ENCODE measurements at regions of chr6 and their contacts with region 1.

Region 1: GRCh38 chr6:106444777-106445507 is 84.4 kb downstream of the CRYBG1 start:
- DNase-seq: peak; percentile 79
- ATAC-seq: peak; percentile 59
- H3K4me3 ChIP-seq: no peak overlapping the region
- H3K4me3 Mint-ChIP-seq: no peak overlapping the region
- H3K27ac ChIP-seq: no peak overlapping the region
- H3K27ac Mint-ChIP-seq: peak overlapping the region; percentile 60
- H3K4me1 ChIP-seq: peaks cover 19 to 22% of the 10 kb centered on the region in 2 donors
- H3K4me1 Mint-ChIP-seq: peaks cover 20% of the 10 kb centered on the region
- H3K27me3 ChIP-seq: peaks cover 0 to 3% (median 0%) of the 10 kb centered on the region in 4 experiments
- H3K27me3 Mint-ChIP-seq: peaks cover 20% of the 10 kb centered on the region
- CTCF ChIP-seq: peak; percentile 92

Region 2: DNA sequence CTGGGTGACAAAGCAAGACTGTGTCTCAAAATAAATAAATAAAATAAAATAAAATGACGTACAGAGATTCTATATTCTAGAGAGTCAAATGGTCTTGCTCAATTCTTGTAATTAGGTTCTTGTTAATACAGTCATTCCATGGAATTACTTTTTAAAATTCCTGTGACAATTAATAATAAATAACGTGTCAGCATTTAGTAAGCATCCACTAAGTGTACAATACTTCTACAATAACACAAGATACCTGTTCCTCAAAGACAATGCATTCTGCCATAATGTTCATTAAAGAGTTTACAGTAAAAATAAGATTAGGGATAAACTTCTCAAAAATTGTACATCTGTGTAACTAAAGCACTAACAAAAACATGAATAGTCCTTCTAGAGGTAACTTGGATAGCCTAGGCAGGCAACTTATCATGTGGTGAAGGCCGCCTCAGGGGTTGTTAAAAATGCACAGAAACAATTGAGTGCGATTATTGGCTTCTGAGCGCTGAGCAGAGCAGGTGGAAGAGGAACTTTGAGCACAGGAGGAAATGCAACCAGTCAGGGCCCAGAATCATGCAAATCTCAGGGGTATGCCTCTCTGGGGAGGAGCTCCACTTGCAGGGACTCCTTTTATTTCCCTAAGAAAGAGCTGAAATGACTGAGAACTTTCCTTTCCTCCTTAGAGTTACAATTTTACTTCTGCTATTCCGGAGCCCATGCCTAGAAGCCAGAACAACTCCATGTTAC is 221.5 kb after region 1 on chr6:
- CTCF ChIA-PET with region 1: no interaction called
- POLR2A ChIA-PET with region 1: no interaction called
- intact Hi-C with region 1: no loop called
- DNase-seq: peak; percentile 86
- ATAC-seq: peak; percentile 99
- H3K4me3 ChIP-seq: peak overlapping the region in 2 of 5 experiments; percentile 2 to 29
- H3K4me3 Mint-ChIP-seq: peak overlapping the region; percentile 80
- H3K27ac ChIP-seq: peak overlapping the region; percentile 30 to 81
- H3K27ac Mint-ChIP-seq: peak overlapping the region; percentile 93
- H3K4me1 ChIP-seq: peaks cover 49 to 61% of the 10 kb centered on the region in 2 donors
- H3K4me1 Mint-ChIP-seq: peaks cover 64% of the 10 kb centered on the region
- H3K27me3 ChIP-seq: no peaks in the 10 kb centered on the region
- H3K27me3 Mint-ChIP-seq: no peaks in the 10 kb centered on the region
- CTCF ChIP-seq: no peak

Region 3: GRCh38 chr6:106688186-106688951 is 243.4 kb after region 1 on chr6:
- CTCF ChIA-PET with region 1: interaction called, 12 read pairs
- POLR2A ChIA-PET with region 1: no interaction called
- intact Hi-C with region 1: loop called (anchors 1 kb)
- DNase-seq: peak; percentile 32
- ATAC-seq: peak; percentile 33
- H3K4me3 ChIP-seq: peak overlapping the region in 1 of 5 experiments; percentile 1
- H3K4me3 Mint-ChIP-seq: peak overlapping the region; percentile 29
- H3K27ac ChIP-seq: no peak overlapping the region
- H3K27ac Mint-ChIP-seq: peak overlapping the region; percentile 26
- H3K4me1 ChIP-seq: peaks cover 19 to 30% of the 10 kb centered on the region in 2 donors
- H3K4me1 Mint-ChIP-seq: peaks cover 32% of the 10 kb centered on the region
- H3K27me3 ChIP-seq: no peaks in the 10 kb centered on the region
- H3K27me3 Mint-ChIP-seq: no peaks in the 10 kb centered on the region
- CTCF ChIP-seq: no peak

Region 4: DNA sequence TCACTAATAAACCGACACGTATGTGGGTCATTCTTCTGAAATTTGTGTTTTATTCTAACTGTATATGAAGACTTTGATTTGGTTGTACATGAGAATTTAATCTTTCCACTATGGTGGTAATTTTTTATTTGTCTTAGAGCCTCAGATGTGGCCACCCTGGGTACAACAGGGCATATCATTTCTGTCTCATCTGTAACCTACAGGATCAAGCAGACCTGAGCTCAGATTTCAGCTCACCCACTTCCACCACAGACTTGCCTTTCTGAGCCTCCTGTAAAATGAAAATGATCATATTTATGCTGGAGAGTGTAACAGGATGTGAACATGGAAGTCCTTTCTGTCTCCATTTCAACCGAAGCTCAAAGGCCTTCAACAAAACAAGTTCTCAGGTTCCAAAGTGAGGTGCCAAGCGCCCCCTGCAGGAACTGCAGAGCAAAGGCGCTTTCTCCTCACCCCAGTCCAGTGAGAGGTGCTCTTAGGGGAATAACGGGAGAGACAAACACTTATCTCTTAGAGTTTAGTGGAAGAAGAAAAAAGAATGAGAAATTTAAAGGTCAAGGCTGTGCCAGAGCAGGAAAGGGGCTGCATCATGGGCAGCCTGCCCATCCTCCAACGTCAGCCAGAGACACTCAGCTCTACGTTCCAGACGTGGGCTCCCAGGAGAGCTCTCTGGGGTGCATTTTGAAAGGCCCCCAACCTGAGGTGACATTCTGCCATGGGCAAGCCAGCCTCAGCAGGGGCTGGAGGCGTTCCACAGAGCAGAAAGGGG is 552.6 kb after region 1 on chr6:
- CTCF ChIA-PET with region 1: interaction called, 18 read pairs
- POLR2A ChIA-PET with region 1: no interaction called
- intact Hi-C with region 1: loop called (anchors 1 kb)
- DNase-seq: peak; percentile 71
- ATAC-seq: peak; percentile 64
- H3K4me3 ChIP-seq: no peak overlapping the region
- H3K4me3 Mint-ChIP-seq: no peak overlapping the region
- H3K27ac ChIP-seq: no peak overlapping the region
- H3K27ac Mint-ChIP-seq: no peak overlapping the region
- H3K4me1 ChIP-seq: peaks cover 0 to 5% of the 10 kb centered on the region in 2 donors
- H3K4me1 Mint-ChIP-seq: no peaks in the 10 kb centered on the region
- H3K27me3 ChIP-seq: no peaks in the 10 kb centered on the region
- H3K27me3 Mint-ChIP-seq: peaks cover 3% of the 10 kb centered on the region
- CTCF ChIP-seq: peak; percentile 95

Measured in B cell (primary cell).